BJ (cell line): ENCODE measurements at regions of chr6 and their contacts with region 1.

Region 1: DNA sequence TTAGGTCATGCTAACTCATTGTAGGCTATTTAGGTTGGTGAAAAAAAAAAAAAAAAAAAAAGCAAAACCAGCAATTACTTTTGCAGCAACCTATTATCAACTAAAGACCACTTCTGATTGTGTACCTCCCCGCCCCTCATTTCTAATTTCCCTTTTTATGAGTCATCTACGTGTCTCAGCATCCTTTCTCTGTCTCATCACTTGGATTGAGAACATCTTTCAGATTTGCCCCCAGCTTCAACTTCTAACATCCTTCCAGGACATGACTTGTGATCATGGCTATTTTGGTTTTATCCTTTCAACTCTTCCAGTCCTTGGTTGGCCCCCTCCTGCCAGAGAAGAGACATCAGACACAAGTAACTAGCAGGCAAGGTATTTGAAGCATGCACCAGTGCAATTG is 156.7 kb upstream of the CCN2 start:
- DNase-seq: no peak
- H3K4me3 ChIP-seq: no peak overlapping the region
- H3K27me3 ChIP-seq: no peaks in the 10 kb centered on the region
- CTCF ChIP-seq: no peak

Region 2: GRCh38 chr6:132131758-132132157 is 23.9 kb after region 1 on chr6:
- CTCF ChIA-PET with region 1: interaction called, 3 read pairs
- POLR2A ChIA-PET with region 1: interaction called, 13 read pairs
- DNase-seq: peak; percentile 98
- H3K4me3 ChIP-seq: no peak overlapping the region
- H3K27me3 ChIP-seq: no peaks in the 10 kb centered on the region
- CTCF ChIP-seq: no peak